Psoas muscle (tissue), 8 donors: ENCODE measurements at regions of chr1 and their contacts with region 1.

Region 1: GRCh38 chr1:156445789-156446263 is 54.7 kb downstream of the MEF2D start:
- DNase-seq: peak; percentile 80 to 89
- ATAC-seq: peak; percentile 92 to 95 (median 94)
- H3K4me3 ChIP-seq: no peak overlapping the region
- H3K27ac ChIP-seq: no peak overlapping the region
- H3K4me1 ChIP-seq: peaks cover 3% of the 10 kb centered on the region
- H3K27me3 ChIP-seq: peaks cover 5 to 41% (median 9%) of the 10 kb centered on the region in 3 donors
- CTCF ChIP-seq: peak; percentile 96

Region 2: GRCh38 chr1:156385534-156386031 is 60.2 kb before region 1 on chr1:
- intact Hi-C with region 1: loop called (anchors 1 kb)
- DNase-seq: peak; percentile 39 to 72
- ATAC-seq: peak; percentile 47 to 85 (median 74)
- H3K4me3 ChIP-seq: no peak overlapping the region
- H3K27ac ChIP-seq: no peak overlapping the region
- H3K4me1 ChIP-seq: no peaks in the 10 kb centered on the region
- H3K27me3 ChIP-seq: peaks cover 0 to 31% (median 6%) of the 10 kb centered on the region in 3 donors
- CTCF ChIP-seq: peak; percentile 89